Endothelial cell of umbilical vein (primary cell): ENCODE measurements at regions of chr14 and their contacts with region 1.

Region 1: DNA sequence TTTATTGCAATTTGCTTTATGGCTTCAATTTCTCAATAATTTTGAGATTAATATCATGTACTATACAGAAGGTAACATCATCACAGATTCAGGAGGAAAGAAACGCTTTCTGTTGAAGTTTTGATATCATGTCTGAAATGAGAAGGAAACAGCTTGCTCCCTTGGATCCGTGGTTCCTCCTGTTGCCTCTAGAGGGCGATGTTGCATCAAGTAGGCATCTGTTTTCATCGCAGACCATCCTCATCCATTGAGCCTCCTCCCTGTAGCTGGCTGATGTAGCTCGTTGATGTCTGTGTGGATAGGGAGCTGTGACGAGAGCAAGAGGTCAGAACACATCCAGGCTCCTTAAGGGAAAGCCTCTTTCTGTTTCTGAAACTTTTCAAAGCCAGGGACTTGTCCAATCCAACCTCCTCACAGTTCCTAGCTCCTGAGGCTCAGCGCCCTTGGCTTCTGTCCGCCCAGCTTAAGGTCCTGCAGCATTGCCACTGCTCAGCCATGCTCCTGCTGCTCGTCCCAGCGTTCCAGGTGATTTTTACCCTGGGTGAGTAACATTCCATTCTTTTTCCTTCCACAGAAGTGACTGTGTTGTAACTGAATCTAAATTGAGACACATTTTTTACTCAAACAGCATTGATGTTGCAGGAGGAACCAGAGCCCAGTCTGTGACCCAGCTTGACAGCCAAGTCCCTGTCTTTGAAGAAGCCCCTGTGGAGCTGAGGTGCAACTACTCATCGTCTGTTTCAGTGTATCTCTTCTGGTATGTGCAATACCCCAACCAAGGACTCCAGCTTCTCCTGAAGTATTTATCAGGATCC is 304.8 kb upstream of the OR4E1 start:
- DNase-seq: peak; percentile 41
- H3K4me3 ChIP-seq: no peak overlapping the region
- H3K27ac ChIP-seq: no peak overlapping the region
- H3K4me1 ChIP-seq: no peaks in the 10 kb centered on the region
- H3K27me3 ChIP-seq: peaks cover 7 to 10% of the 10 kb centered on the region in 2 experiments
- CTCF ChIP-seq: peak; percentile 78 to 87
- POLR2A ChIP-seq: no peak

Region 2: GRCh38 chr14:21003788-21004346 is 974.5 kb before region 1 on chr14:
- CTCF ChIA-PET with region 1: no interaction called
- POLR2A ChIA-PET with region 1: no interaction called
- dilution Hi-C with region 1: no loop called
- intact Hi-C with region 1: no loop called
- DNase-seq: no peak
- H3K4me3 ChIP-seq: no peak overlapping the region
- H3K27ac ChIP-seq: no peak overlapping the region
- H3K4me1 ChIP-seq: no peaks in the 10 kb centered on the region
- H3K27me3 ChIP-seq: no peaks in the 10 kb centered on the region
- CTCF ChIP-seq: no peak
- POLR2A ChIP-seq: no peak

Region 3: GRCh38 chr14:21703357-21704326 is 274.7 kb before region 1 on chr14:
- CTCF ChIA-PET with region 1: no interaction called
- POLR2A ChIA-PET with region 1: no interaction called
- dilution Hi-C with region 1: no loop called
- intact Hi-C with region 1: no loop called
- DNase-seq: no peak
- H3K4me3 ChIP-seq: no peak overlapping the region
- H3K27ac ChIP-seq: no peak overlapping the region
- H3K4me1 ChIP-seq: no peaks in the 10 kb centered on the region
- H3K27me3 ChIP-seq: peaks cover 6 to 8% of the 10 kb centered on the region in 2 experiments
- CTCF ChIP-seq: no peak
- POLR2A ChIP-seq: no peak

Region 4: GRCh38 chr14:21868442-21869046 is 109.8 kb before region 1 on chr14:
- CTCF ChIA-PET with region 1: interaction called, 12 read pairs
- POLR2A ChIA-PET with region 1: no interaction called
- dilution Hi-C with region 1: no loop called
- intact Hi-C with region 1: no loop called
- DNase-seq: peak; percentile 90
- H3K4me3 ChIP-seq: no peak overlapping the region
- H3K27ac ChIP-seq: peak overlapping the region; percentile 88
- H3K4me1 ChIP-seq: peaks cover 29% of the 10 kb centered on the region
- H3K27me3 ChIP-seq: no peaks in the 10 kb centered on the region
- CTCF ChIP-seq: peak; percentile 80 to 83
- POLR2A ChIP-seq: no peak

Region 5: DNA sequence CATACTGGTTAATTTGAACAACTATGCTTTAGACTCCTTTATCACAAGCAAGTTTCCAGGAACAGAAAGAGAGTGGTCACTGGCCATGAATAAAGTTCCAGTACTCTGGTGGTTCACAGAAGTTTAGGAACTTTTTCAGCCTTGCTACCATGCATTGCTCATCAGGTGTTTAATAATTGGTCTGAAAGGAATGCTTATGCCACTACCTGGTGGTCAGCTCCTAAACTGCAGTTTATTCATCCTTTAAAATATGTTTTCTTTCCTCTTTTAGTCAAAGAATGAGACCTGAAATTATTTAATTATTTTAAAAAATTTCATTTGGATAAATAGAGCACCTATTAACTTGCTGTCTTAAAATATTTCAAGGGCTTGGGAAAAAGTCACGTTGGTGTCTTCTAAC is 44.7 kb before region 1 on chr14:
- CTCF ChIA-PET with region 1: interaction called, 10 read pairs
- POLR2A ChIA-PET with region 1: no interaction called
- dilution Hi-C with region 1: no loop called
- intact Hi-C with region 1: no loop called
- DNase-seq: peak; percentile 53
- H3K4me3 ChIP-seq: no peak overlapping the region
- H3K27ac ChIP-seq: no peak overlapping the region
- H3K4me1 ChIP-seq: no peaks in the 10 kb centered on the region
- H3K27me3 ChIP-seq: no peaks in the 10 kb centered on the region
- CTCF ChIP-seq: peak; percentile 35 to 52
- POLR2A ChIP-seq: no peak

Region 6: GRCh38 chr14:21997300-21997699 is 18.9 kb after region 1 on chr14:
- CTCF ChIA-PET with region 1: interaction called, 184 read pairs
- POLR2A ChIA-PET with region 1: no interaction called
- dilution Hi-C with region 1: no loop called
- intact Hi-C with region 1: no loop called
- DNase-seq: peak; percentile 23
- H3K4me3 ChIP-seq: no peak overlapping the region
- H3K27ac ChIP-seq: no peak overlapping the region
- H3K4me1 ChIP-seq: no peaks in the 10 kb centered on the region
- H3K27me3 ChIP-seq: peaks cover 0 to 1% of the 10 kb centered on the region in 2 experiments
- CTCF ChIP-seq: peak; percentile 6 to 26
- POLR2A ChIP-seq: no peak

Region 7: DNA sequence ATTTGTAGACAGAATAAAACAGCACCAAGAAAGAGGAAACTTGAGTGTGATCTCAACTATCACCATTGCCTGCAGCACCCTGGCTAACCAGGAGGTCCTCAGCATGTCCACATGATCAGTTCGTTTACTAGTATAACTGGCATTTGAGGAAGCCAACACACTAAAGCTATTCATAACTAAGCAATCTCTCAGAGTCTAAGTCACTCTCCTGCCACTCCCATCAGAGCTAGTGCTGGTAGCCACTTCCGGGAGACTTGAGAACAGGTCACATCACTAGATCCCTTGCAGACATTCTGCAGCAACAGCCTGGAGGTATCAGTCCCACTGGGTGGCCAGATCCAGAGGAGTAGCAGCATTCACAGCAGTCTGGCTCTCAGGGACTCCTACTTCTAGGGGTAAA is 48.1 kb after region 1 on chr14:
- CTCF ChIA-PET with region 1: interaction called, 25 read pairs
- POLR2A ChIA-PET with region 1: no interaction called
- dilution Hi-C with region 1: no loop called
- intact Hi-C with region 1: no loop called
- DNase-seq: no peak
- H3K4me3 ChIP-seq: no peak overlapping the region
- H3K27ac ChIP-seq: no peak overlapping the region
- H3K4me1 ChIP-seq: no peaks in the 10 kb centered on the region
- H3K27me3 ChIP-seq: peaks cover 6 to 31% of the 10 kb centered on the region in 2 experiments
- CTCF ChIP-seq: no peak
- POLR2A ChIP-seq: no peak

Region 8: GRCh38 chr14:22221508-22221907 is 243.1 kb after region 1 on chr14:
- CTCF ChIA-PET with region 1: no interaction called
- POLR2A ChIA-PET with region 1: no interaction called
- dilution Hi-C with region 1: no loop called
- intact Hi-C with region 1: no loop called
- DNase-seq: peak; percentile 16
- H3K4me3 ChIP-seq: no peak overlapping the region
- H3K27ac ChIP-seq: no peak overlapping the region
- H3K4me1 ChIP-seq: peaks cover 10% of the 10 kb centered on the region
- H3K27me3 ChIP-seq: peaks cover 7 to 20% of the 10 kb centered on the region in 2 experiments
- CTCF ChIP-seq: peak; percentile 14 to 31
- POLR2A ChIP-seq: no peak